HEK293T (cell line): ENCODE measurements at regions of chr15 and their contacts with region 1.

Region 1: GRCh38 chr15:44286814-44287452 is 1.6 kb upstream of the GOLM2 start:
- DNase-seq: no peak

Region 2: GRCh38 chr15:44207643-44208042 is 79.3 kb before region 1 on chr15:
- CTCF ChIA-PET with region 1: no interaction called
- POLR2A ChIA-PET with region 1: no interaction called
- DNase-seq: no peak

Region 3: GRCh38 chr15:44275150-44275830 is 11.6 kb before region 1 on chr15:
- CTCF ChIA-PET with region 1: no interaction called
- POLR2A ChIA-PET with region 1: interaction called, 11 read pairs
- DNase-seq: no peak

Region 4: GRCh38 chr15:44381236-44381635 is 94.3 kb after region 1 on chr15:
- CTCF ChIA-PET with region 1: no interaction called
- POLR2A ChIA-PET with region 1: no interaction called
- DNase-seq: no peak